Activated naive CD4-positive, alpha-beta T cell treated with anti-CD3 and anti-CD28 coated beads, Interleukin-2, amount 10 ng/mL, durations not matched to agents 7 days and 5 days (primary cell): ENCODE measurements at regions of chr1 and their contacts with region 1.

Region 1: GRCh38 chr1:111702504-111703050 is 36.6 kb downstream of the INKA2 start:
- DNase-seq: no peak
- H3K4me3 Mint-ChIP-seq: no peak overlapping the region
- H3K27ac Mint-ChIP-seq: no peak overlapping the region
- H3K4me1 Mint-ChIP-seq: no peaks in the 10 kb centered on the region
- H3K27me3 Mint-ChIP-seq: no peaks in the 10 kb centered on the region

Region 2: GRCh38 chr1:111720274-111720976 is 17.8 kb after region 1 on chr1:
- CTCF ChIA-PET with region 1: interaction called, 28 read pairs
- DNase-seq: no peak
- H3K4me3 Mint-ChIP-seq: peak overlapping the region; percentile 5
- H3K27ac Mint-ChIP-seq: peak overlapping the region; percentile 50
- H3K4me1 Mint-ChIP-seq: peaks cover 8% of the 10 kb centered on the region
- H3K27me3 Mint-ChIP-seq: no peaks in the 10 kb centered on the region